ENCODE measurements at regions of chr2 and their contacts with region 1.

Region 1: GRCh38 chr2:71923887-71924533 is 223.7 kb downstream of the CYP26B1 start:
- DNase-seq: peak; percentile 92
- H3K4me3 ChIP-seq: no peak overlapping the region
- H3K27ac ChIP-seq: no peak overlapping the region
- H3K4me1 ChIP-seq: no peaks in the 10 kb centered on the region
- H3K27me3 ChIP-seq: no peaks in the 10 kb centered on the region
- CTCF ChIP-seq: peak; percentile 67 to 86 (median 80)
- EP300 ChIP-seq: no peak
- POLR2A ChIP-seq: no peak

Region 2: GRCh38 chr2:71545572-71546274 is 378.3 kb before region 1 on chr2:
- intact Hi-C with region 1: loop called (anchors 10 kb)
- DNase-seq: no peak
- H3K4me3 ChIP-seq: peak overlapping the region in 2 of 4 donors; percentile 23 to 32
- H3K27ac ChIP-seq: peak overlapping the region in 3 of 4 donors; percentile 26 to 55 (median 50)
- H3K4me1 ChIP-seq: peaks cover 3 to 13% (median 10%) of the 10 kb centered on the region in 4 donors
- H3K27me3 ChIP-seq: no peaks in the 10 kb centered on the region
- CTCF ChIP-seq: peak; percentile 55 to 67 (median 57)
- EP300 ChIP-seq: no peak
- POLR2A ChIP-seq: no peak

Region 3: DNA sequence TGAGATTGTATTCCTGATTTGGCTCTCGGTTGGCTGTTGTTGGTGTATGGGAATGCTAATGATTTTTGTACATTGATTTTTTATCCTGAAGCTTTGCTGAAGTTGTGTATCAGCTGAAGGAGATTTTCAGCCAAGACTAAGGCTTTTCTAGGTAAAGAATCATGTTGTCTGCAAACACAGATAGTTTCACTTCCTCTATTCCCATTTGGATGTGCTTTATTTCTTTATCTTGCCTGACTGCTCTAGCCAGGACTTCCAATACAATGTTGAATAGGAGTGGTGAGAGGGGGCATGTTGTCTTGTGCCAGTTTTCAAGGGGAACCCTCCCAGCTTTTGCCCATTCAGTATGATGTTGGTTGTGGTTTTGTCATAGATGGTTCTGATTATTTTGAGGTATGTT is 133.3 kb after region 1 on chr2:
- intact Hi-C with region 1: no loop called
- DNase-seq: no peak
- H3K4me3 ChIP-seq: no peak overlapping the region
- H3K27ac ChIP-seq: no peak overlapping the region
- H3K4me1 ChIP-seq: no peaks in the 10 kb centered on the region
- H3K27me3 ChIP-seq: no peaks in the 10 kb centered on the region
- CTCF ChIP-seq: no peak
- EP300 ChIP-seq: no peak
- POLR2A ChIP-seq: no peak

Region 4: DNA sequence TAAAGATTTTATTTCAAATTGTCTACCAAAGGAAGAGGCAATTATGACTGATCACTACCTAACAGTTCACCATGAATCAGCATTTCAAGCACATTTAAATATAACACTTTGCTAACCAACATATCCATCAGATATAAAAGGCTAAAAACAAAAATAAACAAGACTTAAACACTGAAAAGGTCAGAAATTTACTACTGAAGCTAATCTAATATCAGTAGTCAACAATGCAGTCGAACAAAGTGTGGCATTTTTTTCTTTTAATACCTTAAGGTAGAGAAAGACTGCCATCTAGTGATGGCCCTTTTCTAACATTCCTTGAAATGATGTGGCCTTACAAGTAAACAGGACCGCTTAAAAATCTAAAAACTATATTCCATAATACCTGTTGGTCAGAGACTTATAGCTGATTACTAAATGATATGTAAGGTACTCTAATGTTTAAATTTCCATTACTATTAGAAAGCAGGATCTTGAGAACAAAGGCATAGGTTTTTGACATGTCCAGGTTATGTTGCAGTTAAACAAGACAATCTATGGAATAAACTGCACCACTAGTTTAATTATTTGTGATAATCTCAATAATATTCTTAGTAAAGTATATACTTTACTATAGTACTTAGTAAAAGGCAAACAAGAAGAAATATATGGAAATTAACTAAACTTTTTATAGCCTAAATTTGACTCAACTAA is 821.8 kb after region 1 on chr2:
- intact Hi-C with region 1: loop called (anchors 10 kb)
- DNase-seq: no peak
- H3K4me3 ChIP-seq: no peak overlapping the region
- H3K27ac ChIP-seq: no peak overlapping the region
- H3K4me1 ChIP-seq: peaks cover 0 to 10% (median 3%) of the 10 kb centered on the region in 4 donors
- H3K27me3 ChIP-seq: no peaks in the 10 kb centered on the region
- CTCF ChIP-seq: peak; percentile 64 to 67 (median 65)
- EP300 ChIP-seq: no peak
- POLR2A ChIP-seq: no peak